Right ventricle myocardium inferior (tissue), 1 donor: ENCODE measurements at regions of chr15 and their contacts with region 1.

Region 1: GRCh38 chr15:51750792-51751685 is at the start of gene TMOD2:
- DNase-seq: peak; percentile 73
- ATAC-seq: peak; percentile 89
- total RNA-seq, gene TMOD2: 9.5 TPM

Region 2: GRCh38 chr15:51708013-51708412 is 43.0 kb before region 1 on chr15:
- intact Hi-C with region 1: loop called (anchors 10 kb)
- DNase-seq: no peak
- ATAC-seq: peak; percentile 56